Activated CD4-positive, alpha-beta T cell treated with anti-CD3 and anti-CD28 coated beads for 36 hours (primary cell): ENCODE measurements at regions of chr10 and their contacts with region 1.

Region 1: GRCh38 chr10:127990846-127991542 is 84.1 kb downstream of the PTPRE start:
- DNase-seq: peak; percentile 84
- ATAC-seq: peak; percentile 77
- H3K4me3 Mint-ChIP-seq: peak overlapping the region; percentile 21
- H3K27ac Mint-ChIP-seq: peak overlapping the region; percentile 89
- H3K4me1 Mint-ChIP-seq: peaks cover 65% of the 10 kb centered on the region
- H3K27me3 Mint-ChIP-seq: peaks cover 2% of the 10 kb centered on the region

Region 2: GRCh38 chr10:128011175-128011979 is 20.4 kb after region 1 on chr10:
- CTCF ChIA-PET with region 1: interaction called, 9 read pairs
- POLR2A ChIA-PET with region 1: no interaction called
- intact Hi-C with region 1: loop called in 1 of 2 experiments (anchors 2 kb)
- DNase-seq: peak; percentile 92
- ATAC-seq: peak; percentile 89
- H3K4me3 Mint-ChIP-seq: peak overlapping the region; percentile 28
- H3K27ac Mint-ChIP-seq: no peak overlapping the region
- H3K4me1 Mint-ChIP-seq: peaks cover 7% of the 10 kb centered on the region
- H3K27me3 Mint-ChIP-seq: peaks cover 3% of the 10 kb centered on the region

Region 3: DNA sequence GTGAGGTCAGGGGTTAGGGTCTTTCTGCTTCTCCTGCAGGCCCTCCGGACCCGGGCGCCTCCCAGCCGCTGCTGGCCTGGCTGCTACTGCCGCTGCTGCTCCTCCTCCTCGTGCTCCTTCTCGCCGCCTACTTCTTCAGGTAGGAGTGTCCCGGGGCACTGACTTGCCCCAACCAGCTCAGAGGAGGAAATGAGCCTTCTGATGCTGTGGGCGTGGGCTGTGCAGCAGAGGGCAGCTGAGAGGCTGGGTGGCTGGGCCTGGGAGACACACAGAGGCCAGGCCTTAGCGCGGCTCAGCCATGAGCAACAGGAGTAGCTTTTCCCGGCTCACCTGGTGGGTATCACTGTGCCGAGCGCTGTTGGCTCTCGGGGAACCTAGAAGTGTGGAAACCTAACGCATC is 56.4 kb after region 1 on chr10:
- CTCF ChIA-PET with region 1: no interaction called
- POLR2A ChIA-PET with region 1: interaction called, 9 read pairs
- intact Hi-C with region 1: loop called (anchors 1 kb)
- DNase-seq: peak; percentile 92
- ATAC-seq: peak; percentile 96
- H3K4me3 Mint-ChIP-seq: peak overlapping the region; percentile 83
- H3K27ac Mint-ChIP-seq: peak overlapping the region; percentile 94
- H3K4me1 Mint-ChIP-seq: peaks cover 51% of the 10 kb centered on the region
- H3K27me3 Mint-ChIP-seq: no peaks in the 10 kb centered on the region

Region 4: DNA sequence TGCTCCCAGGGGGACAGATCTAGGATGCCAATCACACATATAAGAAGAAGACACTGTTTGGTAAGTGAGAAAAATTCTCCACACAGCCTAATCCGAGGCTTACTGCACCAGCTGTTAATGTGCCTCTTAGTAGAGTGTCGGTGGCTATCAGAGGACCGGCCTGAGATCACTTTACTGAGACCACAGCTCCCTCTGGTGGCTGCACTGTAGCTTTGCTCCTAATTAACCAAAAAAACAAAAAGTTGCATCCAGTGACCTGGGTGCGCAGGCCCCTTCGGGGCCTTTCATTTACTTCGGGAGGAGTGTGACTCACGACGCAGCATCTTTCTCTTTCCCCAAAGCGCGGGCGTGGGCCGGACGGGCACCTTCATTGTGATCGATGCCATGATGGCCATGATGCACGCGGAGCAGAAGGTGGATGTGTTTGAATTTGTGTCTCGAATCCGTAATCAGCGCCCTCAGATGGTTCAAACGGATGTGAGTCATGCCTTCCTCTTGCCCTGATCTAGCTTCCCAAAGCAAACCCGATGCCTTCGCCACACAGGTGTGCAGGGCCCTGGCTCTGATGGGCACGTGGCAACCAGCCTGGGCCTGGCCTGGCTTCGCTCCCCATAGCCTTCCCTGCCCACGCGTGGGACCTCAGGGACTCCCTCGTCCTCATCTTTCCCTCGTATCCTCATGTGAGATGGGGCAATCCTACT is 78.5 kb after region 1 on chr10:
- CTCF ChIA-PET with region 1: interaction called, 10 read pairs
- POLR2A ChIA-PET with region 1: interaction called, 7 read pairs
- intact Hi-C with region 1: loop called (anchors 1 kb)
- DNase-seq: peak; percentile 91
- ATAC-seq: peak; percentile 35
- H3K4me3 Mint-ChIP-seq: no peak overlapping the region
- H3K27ac Mint-ChIP-seq: no peak overlapping the region
- H3K4me1 Mint-ChIP-seq: peaks cover 39% of the 10 kb centered on the region
- H3K27me3 Mint-ChIP-seq: no peaks in the 10 kb centered on the region

Region 5: DNA sequence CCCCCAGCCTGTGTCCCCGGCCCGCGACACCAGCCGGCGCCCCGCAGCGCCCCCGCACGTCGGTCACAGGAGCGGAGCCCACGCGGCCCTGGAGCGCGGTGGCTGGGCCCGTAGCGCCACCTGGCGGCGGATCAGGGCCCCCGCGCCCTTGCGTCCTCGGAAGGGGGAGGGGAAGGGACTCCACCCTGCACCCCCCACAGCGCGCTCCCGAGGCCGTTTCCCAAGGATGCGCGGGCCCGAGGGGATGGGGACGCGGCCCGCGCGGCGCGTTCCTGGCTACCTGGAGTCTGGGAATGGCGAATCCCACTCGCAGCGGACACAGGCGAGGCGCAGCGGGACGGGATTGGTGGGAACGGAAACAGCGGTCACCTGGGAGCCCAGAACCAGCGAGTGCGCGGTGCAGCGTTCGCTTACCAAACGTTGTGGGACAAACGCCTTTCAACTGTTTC is 159.1 kb after region 1 on chr10:
- CTCF ChIA-PET with region 1: interaction called, 3 read pairs
- POLR2A ChIA-PET with region 1: no interaction called
- intact Hi-C with region 1: loop called in 1 of 2 experiments (anchors 1 kb)
- DNase-seq: peak; percentile 89
- ATAC-seq: peak; percentile 96
- H3K4me3 Mint-ChIP-seq: peak overlapping the region; percentile 60
- H3K27ac Mint-ChIP-seq: no peak overlapping the region
- H3K4me1 Mint-ChIP-seq: peaks cover 21% of the 10 kb centered on the region
- H3K27me3 Mint-ChIP-seq: no peaks in the 10 kb centered on the region

Region 6: DNA sequence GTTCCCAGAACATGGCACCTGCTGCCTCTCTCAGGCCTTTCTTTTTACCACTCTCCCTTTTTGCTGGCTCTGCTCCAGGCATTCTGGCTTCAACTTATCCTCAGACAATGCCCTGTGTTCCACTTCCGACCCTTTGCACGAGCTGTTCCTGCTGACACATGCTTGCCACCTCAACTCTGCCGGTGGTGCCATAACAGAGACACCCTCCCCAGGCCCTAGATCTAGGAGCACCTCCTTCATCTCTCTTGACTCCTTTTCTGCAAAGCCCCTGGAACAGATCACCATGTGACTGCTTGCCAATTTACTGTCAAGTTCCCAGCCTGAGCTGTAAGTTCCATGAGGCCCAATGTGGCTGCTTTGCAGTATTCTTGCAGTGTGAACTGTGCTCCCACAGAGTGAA is 391.2 kb after region 1 on chr10:
- CTCF ChIA-PET with region 1: no interaction called
- POLR2A ChIA-PET with region 1: no interaction called
- intact Hi-C with region 1: no loop called
- DNase-seq: no peak
- ATAC-seq: no peak
- H3K4me3 Mint-ChIP-seq: no peak overlapping the region
- H3K27ac Mint-ChIP-seq: no peak overlapping the region
- H3K4me1 Mint-ChIP-seq: no peaks in the 10 kb centered on the region
- H3K27me3 Mint-ChIP-seq: no peaks in the 10 kb centered on the region